ENCODE measurements at regions of chr5 and their contacts with region 1.

Region 1: GRCh38 chr5:151740336-151740942 is 18.0 kb downstream of the ATOX1 start:
- DNase-seq: peak; percentile 85
- H3K4me3 ChIP-seq: peak overlapping the region; percentile 27
- H3K27ac ChIP-seq: peak overlapping the region; percentile 99
- H3K27me3 ChIP-seq: no peaks in the 10 kb centered on the region
- CTCF ChIP-seq: peak; percentile 84

Region 2: GRCh38 chr5:151447174-151448037 is 293.0 kb before region 1 on chr5 and contains the start of gene SLC36A1:
- CTCF ChIA-PET with region 1: interaction called, 16 read pairs
- POLR2A ChIA-PET with region 1: no interaction called
- DNase-seq: peak; percentile 70
- H3K4me3 ChIP-seq: peak within 1 kb of the TSS; percentile 73
- H3K27ac ChIP-seq: peak within 1 kb of the TSS; percentile 39
- H3K27me3 ChIP-seq: no peaks in the 10 kb centered on the region
- CTCF ChIP-seq: peak; percentile 98
- polyA plus RNA-seq, gene SLC36A1: 22.2 and 22.3 TPM in 2 replicates

Region 3: GRCh38 chr5:151628112-151628823 is 112.2 kb before region 1 on chr5:
- CTCF ChIA-PET with region 1: no interaction called
- POLR2A ChIA-PET with region 1: no interaction called
- DNase-seq: no peak
- H3K4me3 ChIP-seq: no peak overlapping the region
- H3K27ac ChIP-seq: no peak overlapping the region
- H3K27me3 ChIP-seq: peaks cover 5% of the 10 kb centered on the region
- CTCF ChIP-seq: no peak

Region 4: DNA sequence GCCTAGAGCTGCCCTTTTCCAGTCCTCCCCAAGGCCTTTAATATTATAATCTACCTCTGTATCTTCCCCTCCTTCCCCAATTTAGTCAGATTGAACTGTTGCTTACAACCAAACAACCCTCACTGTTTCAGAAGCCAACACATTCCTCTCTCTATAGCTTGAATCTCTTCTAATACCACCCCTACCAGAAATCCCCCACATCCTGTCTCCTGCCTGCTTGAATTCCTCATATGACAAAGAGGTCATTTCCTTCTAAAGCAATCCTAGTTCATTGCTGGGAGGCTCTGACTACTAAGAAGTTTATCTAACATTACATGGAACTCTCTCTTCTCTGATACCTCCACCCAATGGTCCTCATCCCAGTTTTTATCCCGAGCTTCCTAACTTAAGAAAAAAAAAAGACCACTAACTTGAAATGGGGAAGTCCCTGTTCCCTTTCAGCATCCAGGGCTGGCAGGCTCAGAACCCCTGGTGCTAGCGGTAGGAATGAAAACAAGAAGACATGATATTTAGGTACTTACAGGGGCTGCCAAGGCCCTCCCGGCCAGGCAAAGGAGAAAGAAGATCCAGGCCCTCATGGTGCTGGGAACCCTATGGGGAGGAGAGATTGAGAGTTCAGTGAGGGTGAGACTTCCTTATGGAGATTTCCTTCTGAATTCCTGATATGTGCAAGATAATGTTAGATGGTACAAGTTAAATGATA is 64.7 kb before region 1 on chr5:
- CTCF ChIA-PET with region 1: interaction called, 36 read pairs
- POLR2A ChIA-PET with region 1: interaction called, 181 read pairs
- DNase-seq: no peak
- H3K4me3 ChIP-seq: peak overlapping the region; percentile 39
- H3K27ac ChIP-seq: peak overlapping the region; percentile 90
- H3K27me3 ChIP-seq: no peaks in the 10 kb centered on the region
- CTCF ChIP-seq: peak; percentile 14; the same call in 1 of the 2 replicates

Region 5: DNA sequence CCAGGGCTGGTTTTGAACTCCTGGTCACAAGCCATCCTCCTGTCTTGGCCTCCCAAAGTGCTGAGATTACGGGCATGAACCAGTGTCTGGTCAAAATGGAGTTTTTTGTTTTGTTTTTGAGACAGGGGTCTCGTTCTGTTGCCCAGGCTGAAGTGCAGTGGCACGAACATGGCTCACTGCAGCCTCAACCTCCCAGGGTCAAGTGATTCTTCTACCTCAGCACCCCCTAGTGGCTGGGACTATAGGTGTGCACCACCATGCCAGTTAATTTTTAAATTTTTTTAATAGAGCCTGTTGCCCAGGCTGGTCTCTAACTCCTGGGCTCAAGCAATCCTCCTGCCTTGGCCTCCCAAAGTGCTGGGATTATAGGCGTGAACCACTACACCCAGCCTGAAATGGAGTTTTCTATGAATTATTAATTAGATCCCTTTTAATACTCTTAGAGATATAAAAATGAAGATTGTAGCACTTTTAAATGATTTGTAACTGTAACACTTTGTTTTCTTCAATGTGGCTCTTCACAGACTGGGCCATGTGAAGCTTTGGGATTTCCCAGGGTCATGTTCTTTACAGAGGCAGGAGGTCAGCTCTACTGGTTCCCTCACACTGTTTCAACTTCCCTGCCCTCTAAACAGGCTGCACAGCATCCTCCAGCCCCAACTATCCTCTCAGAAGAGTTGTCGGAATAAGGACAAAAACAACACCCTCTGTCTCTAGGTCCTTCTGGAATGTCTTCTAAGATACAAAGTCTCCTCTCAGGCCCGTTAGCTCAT is 21.0 kb before region 1 on chr5:
- CTCF ChIA-PET with region 1: interaction called, 14 read pairs
- POLR2A ChIA-PET with region 1: interaction called, 12 read pairs
- DNase-seq: no peak
- H3K4me3 ChIP-seq: no peak overlapping the region
- H3K27ac ChIP-seq: peak overlapping the region; percentile 85
- H3K27me3 ChIP-seq: no peaks in the 10 kb centered on the region
- CTCF ChIP-seq: peak; percentile 48

Region 6: DNA sequence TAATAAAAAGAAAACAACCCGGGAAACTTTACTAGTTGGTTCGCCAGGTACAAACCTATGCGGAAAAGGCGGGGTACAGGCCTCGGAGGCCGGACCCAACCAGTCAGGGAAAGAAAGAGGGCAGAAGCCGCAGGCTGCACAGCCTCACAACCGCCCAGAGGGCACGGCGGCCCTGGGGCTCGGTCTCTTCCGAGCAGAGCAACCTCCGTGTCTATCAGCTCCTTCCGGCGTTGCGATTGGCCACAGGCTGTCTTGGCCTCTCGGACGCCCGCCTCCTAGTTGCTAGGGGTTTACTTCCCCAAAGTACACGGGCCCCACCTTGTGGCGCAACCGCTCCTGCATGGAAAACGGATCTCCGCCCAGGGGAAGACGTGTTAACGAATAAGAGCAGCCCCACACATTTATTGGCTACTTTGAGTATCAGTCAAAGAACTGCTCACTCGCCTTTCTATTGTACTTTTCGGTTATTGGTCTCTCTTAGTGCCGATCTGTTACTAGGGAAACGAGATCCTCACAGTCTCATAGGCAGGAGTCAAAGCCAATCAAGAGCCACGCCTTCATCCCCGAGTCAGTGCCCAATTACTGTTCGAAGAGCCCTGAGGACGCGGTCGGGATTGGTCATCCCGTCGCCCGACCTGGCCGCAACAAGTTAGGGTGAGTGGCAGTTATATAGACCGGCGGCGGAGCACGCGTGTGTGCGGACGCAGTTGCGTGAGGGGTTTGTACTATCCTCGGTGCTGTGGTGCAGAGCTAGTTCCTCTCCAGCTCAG is 31.0 kb after region 1 on chr5 and contains the start of gene G3BP1:
- CTCF ChIA-PET with region 1: interaction called, 9 read pairs
- POLR2A ChIA-PET with region 1: interaction called, 24 read pairs
- DNase-seq: peak; percentile 100
- H3K4me3 ChIP-seq: peak within 1 kb of the TSS; percentile 91
- H3K27ac ChIP-seq: peak within 1 kb of the TSS; percentile 95
- H3K27me3 ChIP-seq: no peaks in the 10 kb centered on the region
- CTCF ChIP-seq: peak; percentile 68
- polyA plus RNA-seq, gene G3BP1: 87.7 and 101 TPM in 2 replicates

Region 7: GRCh38 chr5:153425914-153426313 is 1685.5 kb after region 1 on chr5:
- CTCF ChIA-PET with region 1: no interaction called
- POLR2A ChIA-PET with region 1: no interaction called
- DNase-seq: no peak
- H3K4me3 ChIP-seq: no peak overlapping the region
- H3K27ac ChIP-seq: no peak overlapping the region
- H3K27me3 ChIP-seq: no peaks in the 10 kb centered on the region
- CTCF ChIP-seq: no peak

Measured in AG04450 (cell line).